ENCODE measurements at regions of chr9 and their contacts with region 1.

Region 1: DNA sequence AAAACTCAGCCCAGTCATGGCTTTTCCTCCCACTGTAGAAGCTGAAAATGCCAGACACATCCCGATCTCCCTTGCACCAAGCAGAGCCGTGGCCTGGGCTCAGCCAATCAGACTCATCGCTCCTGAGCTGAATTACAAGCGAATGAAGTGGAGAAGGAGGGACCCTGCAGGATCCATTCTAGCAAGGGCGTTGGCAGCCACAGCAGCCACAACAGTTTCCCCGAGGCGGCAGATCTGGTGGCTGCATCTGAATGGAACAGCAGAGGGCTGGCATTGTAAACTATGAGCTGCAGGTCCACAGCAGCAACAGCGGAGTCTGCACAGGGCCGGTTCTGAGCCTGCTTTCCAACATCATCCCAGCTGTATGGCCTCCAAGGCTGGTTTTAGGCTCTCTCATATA is 23.8 kb downstream of the ALG2 start:
- DNase-seq: no peak
- H3K4me3 ChIP-seq: no peak overlapping the region
- H3K27ac ChIP-seq: no peak overlapping the region
- H3K4me1 ChIP-seq: 0 out of 7 replicates have a peak, but pooled peaks cover 0 to 1% (median 0%) of the 10 kb centered on the region in 4 experiments
- H3K27me3 ChIP-seq: no peaks in the 10 kb centered on the region
- CTCF ChIP-seq: no peak
- EP300 ChIP-seq: no peak
- POLR2A ChIP-seq: no peak
- RAD21 ChIP-seq: no peak

Region 2: DNA sequence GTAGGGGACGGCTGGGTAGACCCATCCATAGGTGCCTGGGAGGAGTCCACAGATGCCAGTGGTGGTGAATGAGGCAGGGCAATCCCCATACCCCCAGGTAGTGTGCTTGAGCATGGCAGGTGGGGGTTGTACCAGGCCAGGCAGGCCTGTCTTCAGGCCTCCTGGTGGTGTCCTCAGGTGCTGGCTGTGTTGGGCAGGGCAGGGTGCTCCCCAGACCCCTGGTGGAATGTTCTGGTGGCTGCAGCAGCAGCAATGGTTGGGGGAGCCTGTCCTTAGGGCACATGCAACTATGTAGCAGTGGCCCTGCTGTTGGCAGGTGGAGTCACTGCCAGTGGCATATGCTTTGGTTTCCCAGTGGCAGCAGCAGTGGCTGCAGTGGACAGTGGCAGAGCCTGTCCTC is 13.8 kb after region 1 on chr9:
- CTCF ChIA-PET with region 1: interaction called, 12 read pairs
- POLR2A ChIA-PET with region 1: interaction called, 7 read pairs
- DNase-seq: no peak
- H3K4me3 ChIP-seq: no peak overlapping the region
- H3K27ac ChIP-seq: no peak overlapping the region
- H3K4me1 ChIP-seq: no peaks in the 10 kb centered on the region
- H3K27me3 ChIP-seq: no peaks in the 10 kb centered on the region
- CTCF ChIP-seq: peak; percentile 38 to 58 (median 48)
- EP300 ChIP-seq: no peak
- POLR2A ChIP-seq: no peak
- RAD21 ChIP-seq: peak in 1 of 2 experiments; percentile 28; a peak in 3 of 4 replicates

Region 3: GRCh38 chr9:99253134-99253533 is 55.1 kb after region 1 on chr9:
- CTCF ChIA-PET with region 1: no interaction called
- POLR2A ChIA-PET with region 1: no interaction called
- DNase-seq: no peak
- H3K4me3 ChIP-seq: no peak overlapping the region
- H3K27ac ChIP-seq: no peak overlapping the region
- H3K4me1 ChIP-seq: no peaks in the 10 kb centered on the region
- H3K27me3 ChIP-seq: no peaks in the 10 kb centered on the region
- CTCF ChIP-seq: no peak
- EP300 ChIP-seq: no peak
- POLR2A ChIP-seq: no peak
- RAD21 ChIP-seq: no peak

Region 4: GRCh38 chr9:99485459-99485858 is 287.5 kb after region 1 on chr9:
- CTCF ChIA-PET with region 1: no interaction called
- POLR2A ChIA-PET with region 1: no interaction called
- DNase-seq: no peak
- H3K4me3 ChIP-seq: no peak overlapping the region
- H3K27ac ChIP-seq: no peak overlapping the region
- H3K4me1 ChIP-seq: peaks cover 3 to 11% (median 5%) of the 10 kb centered on the region in 4 experiments; a peak in 5 of 7 replicates
- H3K27me3 ChIP-seq: no peaks in the 10 kb centered on the region; a peak in 2 of 7 replicates
- CTCF ChIP-seq: no peak
- EP300 ChIP-seq: no peak
- POLR2A ChIP-seq: no peak
- RAD21 ChIP-seq: no peak

Measured in H1 (cell line).